ENCODE measurements at regions of chr11 and their contacts with region 1.

Region 1: GRCh38 chr11:6443269-6444003 is 2.6 kb upstream of the HPX start:
- DNase-seq: peak; percentile 35
- H3K4me3 ChIP-seq: no peak overlapping the region
- H3K27ac ChIP-seq: no peak overlapping the region
- H3K4me1 ChIP-seq: no peaks in the 10 kb centered on the region
- H3K27me3 ChIP-seq: no peaks in the 10 kb centered on the region
- CTCF ChIP-seq: peak; percentile 42 to 75 (median 68)
- POLR2A ChIP-seq: no peak

Region 2: GRCh38 chr11:6022956-6023355 is 420.5 kb before region 1 on chr11:
- intact Hi-C with region 1: loop called (anchors 10 kb)
- DNase-seq: peak; percentile 7
- H3K4me3 ChIP-seq: no peak overlapping the region
- H3K27ac ChIP-seq: no peak overlapping the region
- H3K4me1 ChIP-seq: no peaks in the 10 kb centered on the region
- H3K27me3 ChIP-seq: no peaks in the 10 kb centered on the region
- CTCF ChIP-seq: peak in 3 of 4 experiments; percentile 29 to 59 (median 45)
- POLR2A ChIP-seq: no peak

Region 3: DNA sequence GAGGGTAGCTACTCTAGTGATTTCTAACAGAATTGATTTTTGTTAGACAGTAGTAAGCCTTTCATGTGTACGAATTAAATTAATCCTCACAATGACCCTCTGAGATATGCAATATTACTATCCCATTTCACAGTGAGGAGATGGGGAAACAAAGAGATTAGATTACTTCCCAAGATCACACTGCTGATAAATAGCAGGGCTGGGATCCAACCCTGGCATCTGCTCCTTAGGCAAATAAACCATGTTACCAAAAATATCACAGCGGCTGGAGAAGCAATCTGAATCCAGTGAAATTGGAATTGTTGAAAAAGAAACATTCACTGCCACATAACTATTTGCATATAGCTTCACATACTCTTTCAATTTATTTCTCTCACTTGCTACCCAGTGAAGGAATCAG is 110.3 kb before region 1 on chr11:
- intact Hi-C with region 1: no loop called
- DNase-seq: no peak
- H3K4me3 ChIP-seq: no peak overlapping the region
- H3K27ac ChIP-seq: no peak overlapping the region
- H3K4me1 ChIP-seq: no peaks in the 10 kb centered on the region
- H3K27me3 ChIP-seq: no peaks in the 10 kb centered on the region
- CTCF ChIP-seq: no peak
- POLR2A ChIP-seq: no peak

Region 4: DNA sequence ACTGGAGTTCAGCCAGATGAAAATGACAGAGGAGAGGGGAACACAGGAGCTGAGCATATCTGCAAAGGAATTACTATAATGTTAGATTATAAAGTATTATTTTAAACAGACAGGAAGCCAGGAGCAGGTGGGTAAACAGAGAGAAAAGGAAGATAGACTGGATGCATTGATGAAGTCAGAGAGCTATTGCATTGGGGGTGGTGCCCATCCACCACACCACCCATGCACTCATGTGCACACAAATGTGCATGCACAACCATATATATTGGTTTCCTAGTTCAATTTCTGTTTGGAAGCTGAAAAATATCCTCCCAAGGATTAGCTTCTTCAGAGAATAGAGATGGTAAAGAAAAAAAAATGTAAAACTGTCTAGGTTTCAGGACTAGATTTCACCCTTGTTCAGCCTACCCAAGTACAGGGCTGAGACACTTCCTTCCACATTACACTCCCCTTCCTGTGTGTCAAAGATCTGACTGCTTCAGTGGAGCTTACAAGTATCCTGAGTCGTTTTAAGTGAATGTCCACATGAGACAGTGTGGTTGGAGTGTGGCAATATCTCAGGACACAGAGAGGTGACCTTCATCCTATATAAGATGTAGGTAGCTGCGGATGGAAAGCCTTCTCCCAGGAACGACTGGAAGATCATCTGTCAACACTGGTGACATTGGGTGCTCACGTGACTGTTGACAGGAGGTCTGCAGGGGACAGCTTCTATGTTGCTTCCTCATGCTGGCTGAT is 65.4 kb before region 1 on chr11:
- intact Hi-C with region 1: loop called (anchors 1 kb)
- DNase-seq: no peak
- H3K4me3 ChIP-seq: no peak overlapping the region
- H3K27ac ChIP-seq: no peak overlapping the region
- H3K4me1 ChIP-seq: no peaks in the 10 kb centered on the region
- H3K27me3 ChIP-seq: no peaks in the 10 kb centered on the region
- CTCF ChIP-seq: no peak
- POLR2A ChIP-seq: no peak

Region 5: DNA sequence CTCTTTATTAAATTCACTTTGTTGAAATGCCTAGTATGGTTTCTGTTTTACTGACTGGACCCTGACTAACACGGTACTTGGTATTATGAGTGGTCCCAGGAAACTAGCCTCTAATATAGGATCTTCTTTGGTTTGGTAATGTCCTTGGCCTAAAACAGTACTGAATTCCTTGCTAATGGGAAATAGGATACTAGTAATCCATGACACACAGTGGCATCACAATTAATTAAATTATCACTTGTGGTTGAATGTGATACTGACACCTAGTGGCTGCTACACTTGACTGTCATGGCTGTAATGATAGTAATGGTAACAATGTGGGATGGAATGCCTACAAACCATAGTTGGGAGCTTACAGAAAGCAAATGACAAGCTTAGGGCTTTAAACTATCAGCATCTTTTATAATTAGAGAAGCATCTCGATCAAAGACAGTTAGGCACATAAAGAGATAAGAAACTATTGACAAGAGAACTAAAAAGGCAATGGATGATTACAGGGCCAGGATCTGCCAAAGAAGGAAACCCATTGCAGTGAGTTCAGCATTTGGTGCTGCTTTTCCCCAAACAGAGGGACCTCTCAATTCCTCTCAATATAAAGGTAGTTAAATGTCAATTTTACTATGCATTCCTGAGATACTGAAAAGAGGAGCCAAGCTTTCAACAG is 62.3 kb after region 1 on chr11:
- intact Hi-C with region 1: loop called (anchors 5 kb)
- DNase-seq: peak; percentile 25
- H3K4me3 ChIP-seq: no peak overlapping the region
- H3K27ac ChIP-seq: no peak overlapping the region
- H3K4me1 ChIP-seq: no peaks in the 10 kb centered on the region
- H3K27me3 ChIP-seq: no peaks in the 10 kb centered on the region
- CTCF ChIP-seq: peak; percentile 56 to 74 (median 74)
- POLR2A ChIP-seq: no peak

Measured in prostate gland (tissue), 2 donors.